Gastrocnemius medialis (tissue), 4 donors: ENCODE measurements at regions of chr3 and their contacts with region 1.

Region 1: DNA sequence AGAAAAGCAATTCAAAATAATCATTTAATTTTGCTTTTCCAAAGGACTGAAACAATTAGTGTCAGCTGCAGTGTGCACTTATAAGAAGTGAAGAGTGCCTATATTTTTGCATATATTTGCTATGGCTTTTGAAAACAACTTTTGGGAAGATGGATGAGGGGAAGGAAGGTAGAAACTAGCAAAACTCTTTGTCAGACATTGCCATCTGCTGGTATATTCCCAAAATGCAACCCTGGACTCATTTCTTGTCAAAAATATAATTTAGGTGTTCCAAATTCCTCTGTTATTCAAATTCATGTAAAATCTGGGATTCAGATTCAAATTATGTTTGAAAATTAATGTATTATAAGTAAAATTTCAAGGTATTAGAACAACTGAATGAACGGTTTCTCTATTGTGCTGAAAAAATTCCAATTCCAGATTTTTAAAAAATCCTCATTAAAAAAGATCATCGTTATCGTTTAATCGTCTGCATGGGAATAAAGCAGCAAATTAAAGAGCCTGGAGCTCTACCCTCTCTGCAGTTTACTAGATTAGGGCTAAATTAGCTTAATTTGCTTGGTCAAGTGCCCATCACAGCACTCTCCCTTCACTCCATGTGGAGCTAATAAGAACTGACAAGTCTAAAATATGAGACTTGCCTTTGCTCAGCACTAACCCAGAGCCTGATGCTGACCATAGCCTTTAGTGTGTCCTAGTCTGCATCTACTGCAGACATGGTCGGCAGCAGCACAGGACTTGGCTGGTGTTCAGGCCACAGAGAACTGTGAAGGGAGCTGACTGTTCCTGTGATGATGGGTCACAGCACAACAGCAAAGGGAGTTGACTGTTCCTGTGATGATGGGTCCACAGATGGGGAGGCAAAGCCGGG is 67.9 kb upstream of the MITF start:
- DNase-seq: no peak
- ATAC-seq: no peak
- H3K4me3 ChIP-seq: no peak overlapping the region
- H3K27ac ChIP-seq: no peak overlapping the region
- H3K4me1 ChIP-seq: no peaks in the 10 kb centered on the region
- H3K27me3 ChIP-seq: peaks cover 0 to 2% (median 0%) of the 10 kb centered on the region in 3 donors
- CTCF ChIP-seq: peak; percentile 47 to 74 (median 61)
- POLR2A ChIP-seq: no peak

Region 2: GRCh38 chr3:69433969-69434325 is 237.4 kb before region 1 on chr3:
- in situ Hi-C with region 1: loop called in 1 of 4 experiments (anchors 5 kb)
- intact Hi-C with region 1: no loop called
- DNase-seq: no peak
- ATAC-seq: no peak
- H3K4me3 ChIP-seq: no peak overlapping the region
- H3K27ac ChIP-seq: no peak overlapping the region
- H3K4me1 ChIP-seq: no peaks in the 10 kb centered on the region
- H3K27me3 ChIP-seq: no peaks in the 10 kb centered on the region
- CTCF ChIP-seq: no peak
- POLR2A ChIP-seq: no peak

Region 3: GRCh38 chr3:69948246-69948862 is 277.0 kb after region 1 on chr3:
- in situ Hi-C with region 1: loop called in 1 of 4 experiments (anchors 25 kb)
- intact Hi-C with region 1: no loop called
- DNase-seq: no peak
- ATAC-seq: no peak
- H3K4me3 ChIP-seq: no peak overlapping the region
- H3K27ac ChIP-seq: no peak overlapping the region
- H3K4me1 ChIP-seq: no peaks in the 10 kb centered on the region
- H3K27me3 ChIP-seq: no peaks in the 10 kb centered on the region
- CTCF ChIP-seq: peak; percentile 15 to 65 (median 39)
- POLR2A ChIP-seq: no peak